CD4-positive, alpha-beta memory T cell (primary cell): ENCODE measurements at regions of chr2 and their contacts with region 1.

Region 1: DNA sequence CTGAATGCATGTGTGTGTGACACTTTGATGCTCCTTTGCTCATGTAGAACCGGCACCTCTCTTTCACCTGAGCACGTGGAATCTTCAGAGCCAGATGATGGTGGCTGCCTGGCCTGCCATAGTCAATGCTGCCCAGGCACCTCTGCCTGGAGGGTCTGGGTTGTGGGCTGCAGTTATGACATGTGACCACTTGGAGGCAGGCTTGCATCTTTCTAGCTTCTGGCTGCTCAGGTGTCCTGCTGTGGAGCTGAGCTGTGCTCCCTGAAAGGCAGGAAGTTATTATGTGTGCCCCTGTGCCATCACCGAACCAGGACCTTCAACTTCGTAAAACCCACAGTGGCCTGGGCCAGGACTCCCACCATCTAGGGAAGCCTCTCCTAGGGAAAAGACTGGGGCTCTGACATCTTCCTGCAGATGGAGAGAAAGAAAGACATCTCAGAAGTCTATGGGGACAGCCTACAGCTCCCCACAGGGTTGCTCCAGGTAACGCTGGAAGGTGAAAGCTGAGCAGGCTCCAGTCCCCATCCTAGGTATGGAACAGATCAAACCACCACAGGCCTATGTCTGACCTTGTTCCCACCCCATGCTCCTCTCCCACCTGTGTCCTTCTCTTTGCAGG is 30.2 kb downstream of the PSD4 start:
- DNase-seq: peak; percentile 73 to 77 (median 75)
- H3K4me3 ChIP-seq: no peak overlapping the region
- H3K4me3 Mint-ChIP-seq: peak overlapping the region in 3 of 8 donors; percentile 27 to 63 (median 49)
- H3K27ac ChIP-seq: peak overlapping the region; percentile 35
- H3K27ac Mint-ChIP-seq: peak overlapping the region; percentile 80 to 91 (median 85)
- H3K4me1 ChIP-seq: peaks cover 12% of the 10 kb centered on the region
- H3K4me1 Mint-ChIP-seq: peaks cover 9 to 32% (median 20%) of the 10 kb centered on the region in 4 donors
- H3K27me3 ChIP-seq: no peaks in the 10 kb centered on the region
- H3K27me3 Mint-ChIP-seq: no peaks in the 10 kb centered on the region

Region 2: DNA sequence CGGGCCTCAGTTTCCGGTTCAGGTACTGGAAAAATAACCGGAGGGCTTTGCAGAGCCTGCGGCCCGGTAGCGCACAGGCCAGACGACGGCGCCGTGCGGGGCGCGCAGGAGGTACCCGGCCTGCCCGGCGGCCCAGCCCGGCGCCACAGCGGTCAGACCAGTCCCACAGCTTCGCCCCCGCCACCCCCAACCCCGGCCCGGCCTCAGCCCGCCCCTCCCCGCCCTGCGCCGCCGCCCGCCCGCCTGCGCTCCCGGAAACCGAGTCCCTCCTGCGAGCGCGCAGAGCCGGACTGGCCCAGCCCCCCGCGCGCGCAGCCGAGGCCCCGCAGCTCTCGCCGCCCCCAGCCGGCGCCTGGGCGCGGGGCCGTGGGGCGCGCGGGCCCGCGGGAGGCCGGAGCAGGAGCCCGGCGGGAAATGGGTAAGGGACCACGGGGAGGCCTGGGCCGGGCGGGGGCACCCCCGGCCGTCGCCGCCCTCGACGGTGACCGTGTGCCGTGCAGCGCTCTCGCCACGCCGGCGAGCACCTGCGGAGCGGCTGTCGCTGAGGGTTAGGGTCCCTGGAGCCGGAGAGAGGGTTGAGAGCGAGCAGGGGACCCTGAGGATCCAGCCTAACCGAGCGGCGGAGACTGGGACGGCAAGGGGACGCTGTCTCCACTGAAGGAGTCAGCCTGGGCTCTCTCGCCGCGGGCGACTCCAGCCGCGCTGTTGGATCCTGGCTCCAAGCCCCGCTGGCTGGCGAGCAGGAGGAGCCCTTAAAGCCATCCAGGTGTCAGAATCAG is 46.7 kb before region 1 on chr2:
- CTCF ChIA-PET with region 1: interaction called, 12 read pairs
- POLR2A ChIA-PET with region 1: interaction called, 10 read pairs
- intact Hi-C with region 1: loop called (anchors 1 kb)
- DNase-seq: peak in 4 of 5 donors; percentile 39 to 57 (median 50)
- H3K4me3 ChIP-seq: peak overlapping the region; percentile 57 to 74
- H3K4me3 Mint-ChIP-seq: peak overlapping the region; percentile 85 to 95 (median 88)
- H3K27ac ChIP-seq: peak overlapping the region; percentile 55
- H3K27ac Mint-ChIP-seq: peak overlapping the region; percentile 57 to 88 (median 74)
- H3K4me1 ChIP-seq: peaks cover 27% of the 10 kb centered on the region
- H3K4me1 Mint-ChIP-seq: peaks cover 13 to 28% (median 23%) of the 10 kb centered on the region in 4 donors
- H3K27me3 ChIP-seq: no peaks in the 10 kb centered on the region
- H3K27me3 Mint-ChIP-seq: no peaks in the 10 kb centered on the region

Region 3: DNA sequence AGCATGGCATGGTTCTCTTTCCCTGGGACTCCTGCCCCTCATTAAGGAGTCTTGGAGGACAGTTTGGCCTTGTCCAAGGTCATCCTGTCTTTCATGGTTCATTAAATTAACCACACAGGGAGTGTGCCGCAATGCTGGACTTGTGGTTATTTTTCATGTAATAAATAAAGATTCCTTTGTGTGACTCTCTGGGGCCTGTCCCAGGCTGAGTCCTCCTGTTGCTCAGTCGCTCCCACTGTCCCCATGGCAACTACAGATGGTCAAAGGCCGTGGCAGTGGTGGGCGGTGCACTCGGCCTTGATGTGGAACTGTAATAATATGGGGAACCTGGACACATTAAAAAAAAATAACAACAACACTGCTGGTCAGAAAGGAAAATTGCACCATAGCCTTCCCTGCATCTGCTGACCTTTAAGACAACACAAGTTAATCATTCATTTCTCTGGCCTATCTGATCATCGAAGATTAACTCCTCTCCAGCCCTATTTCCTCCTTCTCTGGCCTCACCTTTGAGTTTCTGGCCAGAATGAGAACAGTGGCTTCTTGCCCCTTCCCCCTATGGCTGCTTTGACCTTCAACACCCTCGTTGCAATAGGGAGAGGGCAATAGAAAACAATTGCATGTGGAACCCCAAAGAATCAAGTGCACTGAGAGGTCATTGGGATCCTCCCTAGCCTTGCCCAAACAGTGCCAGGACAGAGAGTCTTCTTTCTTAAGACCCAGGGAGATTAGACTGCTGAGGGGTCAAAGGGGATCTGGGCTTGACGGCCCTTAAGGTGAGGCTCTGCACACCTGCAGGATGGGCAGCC is 14.5 kb after region 1 on chr2:
- CTCF ChIA-PET with region 1: interaction called, 18 read pairs
- POLR2A ChIA-PET with region 1: interaction called, 13 read pairs
- intact Hi-C with region 1: no loop called
- DNase-seq: no peak
- H3K4me3 ChIP-seq: no peak overlapping the region
- H3K4me3 Mint-ChIP-seq: peak overlapping the region in 1 of 8 donors; percentile 4
- H3K27ac ChIP-seq: no peak overlapping the region
- H3K27ac Mint-ChIP-seq: peak overlapping the region in 1 of 7 donors; percentile 15
- H3K4me1 ChIP-seq: peaks cover 10% of the 10 kb centered on the region
- H3K4me1 Mint-ChIP-seq: peaks cover 9 to 18% (median 12%) of the 10 kb centered on the region in 4 donors
- H3K27me3 ChIP-seq: no peaks in the 10 kb centered on the region
- H3K27me3 Mint-ChIP-seq: no peaks in the 10 kb centered on the region

Region 4: DNA sequence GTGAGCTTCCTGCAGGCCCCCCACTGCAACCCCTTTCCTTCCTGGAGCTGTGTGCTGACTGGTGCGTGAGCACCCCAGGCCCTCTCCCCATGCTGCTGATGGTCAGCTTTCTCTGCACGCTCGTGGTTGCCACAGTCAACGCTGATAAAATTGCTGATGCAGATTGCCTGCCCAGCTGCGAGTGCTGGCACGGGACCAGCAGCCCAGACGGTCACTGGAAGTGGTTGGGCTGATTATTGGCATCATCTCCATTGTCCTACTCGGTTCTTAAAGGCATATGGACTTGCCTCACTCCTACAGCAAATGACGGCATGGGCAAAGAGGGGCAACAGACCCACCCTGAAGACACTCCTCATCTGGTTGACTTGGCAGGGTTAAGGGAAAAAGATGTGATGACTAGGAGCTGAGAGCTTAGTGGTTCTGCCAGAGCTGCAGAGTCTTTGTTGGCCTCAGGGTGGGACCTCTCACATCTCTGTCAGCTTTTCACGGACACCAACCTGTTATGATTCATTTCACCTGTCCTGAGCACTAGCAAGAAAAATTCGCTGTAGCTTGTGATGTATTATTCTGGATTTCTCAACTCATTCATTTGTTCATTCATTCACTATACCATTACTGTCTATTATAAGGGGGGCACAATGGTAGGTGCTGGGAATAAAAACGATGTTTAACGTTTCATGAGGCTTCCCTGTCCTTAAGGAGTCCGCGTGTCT is 36.3 kb after region 1 on chr2:
- CTCF ChIA-PET with region 1: interaction called, 90 read pairs
- POLR2A ChIA-PET with region 1: interaction called, 8 read pairs
- intact Hi-C with region 1: loop called (anchors 1 kb)
- DNase-seq: no peak
- H3K4me3 ChIP-seq: no peak overlapping the region
- H3K4me3 Mint-ChIP-seq: no peak overlapping the region
- H3K27ac ChIP-seq: no peak overlapping the region
- H3K27ac Mint-ChIP-seq: peak overlapping the region in 2 of 7 donors; percentile 14 to 47
- H3K4me1 ChIP-seq: peaks cover 6% of the 10 kb centered on the region
- H3K4me1 Mint-ChIP-seq: peaks cover 0 to 48% (median 0%) of the 10 kb centered on the region in 4 donors
- H3K27me3 ChIP-seq: no peaks in the 10 kb centered on the region
- H3K27me3 Mint-ChIP-seq: no peaks in the 10 kb centered on the region

Region 5: GRCh38 chr2:113257516-113258264 is 53.7 kb after region 1 on chr2:
- CTCF ChIA-PET with region 1: interaction called, 22 read pairs
- POLR2A ChIA-PET with region 1: interaction called, 3 read pairs
- intact Hi-C with region 1: no loop called
- DNase-seq: no peak
- H3K4me3 ChIP-seq: no peak overlapping the region
- H3K4me3 Mint-ChIP-seq: no peak overlapping the region
- H3K27ac ChIP-seq: no peak overlapping the region
- H3K27ac Mint-ChIP-seq: peak overlapping the region in 2 of 7 donors; percentile 40 to 54
- H3K4me1 ChIP-seq: peaks cover 38% of the 10 kb centered on the region
- H3K4me1 Mint-ChIP-seq: peaks cover 33 to 53% (median 42%) of the 10 kb centered on the region in 4 donors
- H3K27me3 ChIP-seq: no peaks in the 10 kb centered on the region
- H3K27me3 Mint-ChIP-seq: no peaks in the 10 kb centered on the region

Region 6: DNA sequence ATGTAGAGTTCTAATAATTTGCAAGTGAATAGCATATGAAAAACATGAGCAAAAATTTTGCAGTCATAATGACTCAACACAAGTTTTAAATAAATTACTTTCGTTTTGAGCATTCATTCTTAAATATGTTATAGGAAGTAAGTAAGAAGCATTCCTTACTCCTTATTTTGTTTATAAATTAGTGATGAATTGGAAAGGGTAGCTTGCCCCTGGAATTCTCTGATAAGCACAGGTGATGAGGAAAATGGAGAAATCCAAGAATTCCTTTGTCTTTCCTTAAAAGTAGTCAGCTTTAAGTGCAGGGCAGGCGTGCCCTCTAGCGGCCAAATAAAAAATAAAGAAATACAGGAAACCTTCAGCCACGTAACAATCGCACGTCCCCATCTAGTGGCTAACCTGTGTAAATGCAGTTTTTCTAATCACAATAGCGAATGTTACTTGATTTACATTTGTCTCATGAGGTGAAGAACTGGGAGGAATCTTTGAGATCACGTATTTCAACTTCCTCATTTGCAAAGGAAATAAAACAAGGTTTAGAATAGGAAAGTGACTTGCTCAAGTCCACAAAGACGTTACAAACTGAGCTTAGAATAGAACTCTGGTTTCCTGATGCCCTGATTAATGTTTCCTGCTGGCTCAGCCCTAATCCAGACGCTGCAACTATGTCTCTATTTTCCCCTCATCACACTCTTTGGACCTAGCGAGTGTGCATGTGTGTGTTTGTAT is 186.3 kb after region 1 on chr2:
- CTCF ChIA-PET with region 1: interaction called, 48 read pairs
- POLR2A ChIA-PET with region 1: interaction called, 4 read pairs
- intact Hi-C with region 1: loop called (anchors 5 kb)
- DNase-seq: peak; percentile 70 to 84 (median 80)
- H3K4me3 ChIP-seq: peak overlapping the region; percentile 27 to 40
- H3K4me3 Mint-ChIP-seq: peak overlapping the region; percentile 61 to 86 (median 72)
- H3K27ac ChIP-seq: no peak overlapping the region
- H3K27ac Mint-ChIP-seq: peak overlapping the region; percentile 44 to 73 (median 67)
- H3K4me1 ChIP-seq: peaks cover 4% of the 10 kb centered on the region
- H3K4me1 Mint-ChIP-seq: peaks cover 5 to 16% (median 10%) of the 10 kb centered on the region in 4 donors
- H3K27me3 ChIP-seq: no peaks in the 10 kb centered on the region
- H3K27me3 Mint-ChIP-seq: peaks cover 1 to 6% of the 10 kb centered on the region in 2 donors